Natural killer cell (primary cell): ENCODE measurements at regions of chr14 and their contacts with region 1.

Region 1: DNA sequence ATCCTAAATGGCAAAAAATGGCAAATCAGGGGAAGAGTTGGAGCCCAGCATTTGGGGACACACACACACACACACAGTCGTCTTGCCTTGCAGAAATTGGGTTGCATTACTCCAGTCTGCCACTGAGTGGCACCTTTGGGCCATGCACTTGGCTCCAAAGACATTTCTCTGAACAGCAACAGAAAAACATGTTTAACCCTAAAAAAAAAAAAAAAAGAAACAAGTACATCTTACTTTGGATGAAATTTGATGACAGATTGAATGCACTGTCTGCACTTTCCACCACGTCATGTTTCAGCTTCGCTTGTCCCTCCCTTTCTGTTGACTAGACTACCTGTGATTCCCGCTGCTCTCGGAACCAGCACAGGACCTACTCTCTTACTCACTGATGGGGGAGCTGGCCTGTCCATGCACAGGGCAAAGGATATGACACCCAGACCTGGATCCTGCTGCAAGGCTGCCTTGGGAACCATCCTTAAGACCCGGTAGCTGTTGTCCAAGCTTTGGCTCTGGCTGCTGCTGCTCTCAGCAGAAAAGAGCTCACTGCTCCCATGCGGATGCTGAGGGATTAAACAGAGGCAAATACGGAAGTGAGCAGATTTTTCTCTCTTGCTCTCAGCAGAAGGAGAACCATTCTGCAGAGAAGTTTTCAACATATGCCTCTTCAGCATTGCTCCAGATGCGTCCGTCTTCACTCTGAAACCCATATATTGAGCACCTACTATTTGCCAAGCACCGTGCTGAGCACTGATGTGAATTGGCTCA is 376.8 kb downstream of the DPF3 start:
- DNase-seq: peak; percentile 68 to 88
- ATAC-seq: peak; percentile 53 to 61 (median 60)
- H3K4me3 ChIP-seq: no peak overlapping the region
- H3K4me3 Mint-ChIP-seq: no peak overlapping the region
- H3K27ac ChIP-seq: no peak overlapping the region
- H3K27ac Mint-ChIP-seq: no peak overlapping the region
- H3K4me1 ChIP-seq: peaks cover 51% of the 10 kb centered on the region
- H3K4me1 Mint-ChIP-seq: peaks cover 56 to 58% of the 10 kb centered on the region in 2 donors
- H3K27me3 ChIP-seq: peaks cover 2% of the 10 kb centered on the region
- H3K27me3 Mint-ChIP-seq: peaks cover 32 to 35% of the 10 kb centered on the region in 2 donors
- CTCF ChIP-seq: peak; percentile 90

Region 2: GRCh38 chr14:72451054-72451972 is 65.8 kb before region 1 on chr14:
- intact Hi-C with region 1: loop called (anchors 2 kb)
- DNase-seq: peak; percentile 40 to 71
- ATAC-seq: peak; percentile 79 to 90 (median 85)
- H3K4me3 ChIP-seq: peak overlapping the region; percentile 3
- H3K4me3 Mint-ChIP-seq: peak overlapping the region; percentile 73
- H3K27ac ChIP-seq: peak overlapping the region; percentile 77
- H3K27ac Mint-ChIP-seq: peak overlapping the region; percentile 90 to 95
- H3K4me1 ChIP-seq: peaks cover 33% of the 10 kb centered on the region
- H3K4me1 Mint-ChIP-seq: peaks cover 36 to 37% of the 10 kb centered on the region in 2 donors
- H3K27me3 ChIP-seq: no peaks in the 10 kb centered on the region
- H3K27me3 Mint-ChIP-seq: no peaks in the 10 kb centered on the region
- CTCF ChIP-seq: no peak

Region 3: GRCh38 chr14:72532686-72533454 is 15.8 kb after region 1 on chr14:
- intact Hi-C with region 1: loop called (anchors 2 kb)
- DNase-seq: peak in 1 of 2 donors; percentile 22
- ATAC-seq: peak in 1 of 3 donors; percentile 30
- H3K4me3 ChIP-seq: no peak overlapping the region
- H3K4me3 Mint-ChIP-seq: peak overlapping the region; percentile 1
- H3K27ac ChIP-seq: no peak overlapping the region
- H3K27ac Mint-ChIP-seq: peak overlapping the region in 1 of 2 donors; percentile 18
- H3K4me1 ChIP-seq: peaks cover 45% of the 10 kb centered on the region
- H3K4me1 Mint-ChIP-seq: peaks cover 65 to 66% of the 10 kb centered on the region in 2 donors
- H3K27me3 ChIP-seq: peaks cover 5% of the 10 kb centered on the region
- H3K27me3 Mint-ChIP-seq: peaks cover 51 to 76% of the 10 kb centered on the region in 2 donors
- CTCF ChIP-seq: no peak

Region 4: GRCh38 chr14:72714094-72714493 is 197.0 kb after region 1 on chr14:
- intact Hi-C with region 1: loop called (anchors 2 kb)
- DNase-seq: peak; percentile 68 to 70
- ATAC-seq: peak; percentile 69 to 95 (median 74)
- H3K4me3 ChIP-seq: no peak overlapping the region
- H3K4me3 Mint-ChIP-seq: peak overlapping the region; percentile 77
- H3K27ac ChIP-seq: no peak overlapping the region
- H3K27ac Mint-ChIP-seq: peak overlapping the region; percentile 6 to 83
- H3K4me1 ChIP-seq: peaks cover 56% of the 10 kb centered on the region
- H3K4me1 Mint-ChIP-seq: peaks cover 42 to 64% of the 10 kb centered on the region in 2 donors
- H3K27me3 ChIP-seq: no peaks in the 10 kb centered on the region
- H3K27me3 Mint-ChIP-seq: peaks cover 16 to 29% of the 10 kb centered on the region in 2 donors
- CTCF ChIP-seq: no peak

Region 5: DNA sequence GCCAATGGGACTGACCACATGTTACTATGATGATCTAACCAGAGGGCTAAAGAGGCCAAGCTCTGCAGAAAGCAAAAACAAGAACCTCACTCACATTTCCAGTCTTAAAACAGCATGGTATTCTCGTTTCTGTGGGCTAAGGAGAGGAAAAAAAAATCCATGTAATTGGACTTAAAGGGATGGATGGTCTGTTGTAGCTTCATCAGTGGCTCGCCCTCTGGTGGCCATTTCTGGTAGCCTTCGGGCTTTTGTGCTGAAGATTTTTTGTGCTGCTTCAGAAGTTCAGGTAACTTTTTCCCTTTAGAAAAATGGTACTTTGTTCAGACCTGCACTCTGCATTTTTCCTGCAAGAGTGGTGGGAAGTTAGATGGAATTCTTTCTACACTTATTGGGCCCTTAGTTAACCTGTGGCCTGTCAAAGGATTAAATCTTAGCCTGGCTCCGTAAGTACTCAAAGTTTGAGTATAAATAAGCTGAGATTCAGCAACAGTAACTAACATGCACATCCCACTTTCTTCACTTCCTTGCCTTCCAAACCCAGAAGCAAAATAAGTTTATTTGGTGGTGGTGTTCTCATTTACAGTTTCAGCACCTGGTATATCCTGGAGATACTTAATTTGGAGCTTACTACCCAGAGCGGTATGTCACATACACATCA is 431.5 kb after region 1 on chr14:
- intact Hi-C with region 1: loop called (anchors 1 kb)
- DNase-seq: peak; percentile 44 to 71
- ATAC-seq: peak in 1 of 3 donors; percentile 61
- H3K4me3 ChIP-seq: no peak overlapping the region
- H3K4me3 Mint-ChIP-seq: no peak overlapping the region
- H3K27ac ChIP-seq: no peak overlapping the region
- H3K27ac Mint-ChIP-seq: no peak overlapping the region
- H3K4me1 ChIP-seq: no peaks in the 10 kb centered on the region
- H3K4me1 Mint-ChIP-seq: no peaks in the 10 kb centered on the region
- H3K27me3 ChIP-seq: no peaks in the 10 kb centered on the region
- H3K27me3 Mint-ChIP-seq: no peaks in the 10 kb centered on the region
- CTCF ChIP-seq: peak; percentile 84